ENCODE measurements at regions of chr6 and their contacts with region 1.

Region 1: DNA sequence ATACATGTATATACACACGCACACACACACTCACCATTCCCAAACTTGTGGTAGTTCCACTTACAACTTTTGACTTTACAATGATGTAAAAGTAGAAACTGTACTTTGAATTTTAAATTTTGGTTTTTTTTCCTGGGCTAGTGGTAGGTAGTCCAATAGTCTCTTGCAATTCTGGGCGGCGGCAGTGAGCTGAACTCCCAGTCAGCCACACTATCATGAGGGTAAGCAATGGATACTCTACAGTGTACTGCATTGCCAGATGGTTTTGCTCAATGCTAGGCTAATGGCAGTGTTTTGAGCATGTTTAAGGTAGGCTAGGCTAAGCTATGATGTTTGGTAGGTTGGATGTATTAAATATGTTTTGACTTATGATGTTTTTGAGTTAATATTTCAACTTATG is 136.2 kb upstream of the GPR6 start:
- DNase-seq: no peak
- H3K4me3 ChIP-seq: no peak overlapping the region
- H3K27ac ChIP-seq: no peak overlapping the region
- H3K4me1 ChIP-seq: no peaks in the 10 kb centered on the region
- CTCF ChIP-seq: no peak

Region 2: DNA sequence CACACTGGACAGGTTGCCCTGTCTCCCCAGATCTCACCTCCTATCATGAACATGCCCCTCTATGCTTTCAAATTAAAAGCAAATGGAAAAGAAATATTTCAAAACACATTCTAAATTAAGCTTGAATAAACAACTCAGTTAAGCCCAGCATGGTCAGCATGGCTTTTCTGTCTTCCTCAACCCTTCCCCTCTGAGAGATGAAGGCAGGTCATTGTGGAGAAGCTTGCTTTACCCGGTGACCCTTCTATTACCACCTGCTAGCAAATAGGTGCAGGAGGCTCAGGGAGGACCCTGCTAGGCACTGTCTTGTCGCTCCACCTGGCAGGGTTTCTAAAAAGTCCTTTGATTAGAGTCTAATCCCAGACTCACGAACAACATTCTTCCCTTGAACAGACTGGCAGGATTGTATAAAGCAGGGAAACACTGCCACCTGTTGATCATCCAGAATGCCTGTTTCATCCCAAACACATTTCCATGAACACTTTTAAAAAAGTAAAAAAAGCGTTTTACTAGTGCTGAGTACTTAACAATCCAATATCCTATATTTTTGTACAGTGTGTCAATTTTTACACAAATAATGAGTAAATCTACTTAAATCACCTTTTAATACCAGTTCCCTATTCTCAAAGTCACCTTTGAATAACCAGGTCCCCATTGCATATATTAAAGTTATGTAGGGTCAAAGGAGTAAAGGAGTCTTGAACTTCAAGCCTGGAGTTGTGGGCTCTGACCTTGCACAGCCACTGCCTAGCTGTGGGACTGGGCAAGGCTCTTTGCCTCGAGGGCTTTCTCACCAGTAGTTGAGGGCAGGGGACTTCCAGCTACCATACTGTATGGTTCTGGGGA is 211.7 kb after region 1 on chr6:
- CTCF ChIA-PET with region 1: interaction called, 15 read pairs
- POLR2A ChIA-PET with region 1: no interaction called
- intact Hi-C with region 1: no loop called
- DNase-seq: peak; percentile 61
- H3K4me3 ChIP-seq: no peak overlapping the region
- H3K27ac ChIP-seq: no peak overlapping the region
- H3K4me1 ChIP-seq: peaks cover 15% of the 10 kb centered on the region
- CTCF ChIP-seq: peak; percentile 88